Psoas muscle (tissue), 8 donors: ENCODE measurements at regions of chr6 and their contacts with region 1.

Region 1: GRCh38 chr6:107114213-107114905 is 956 bp downstream of the BEND3 start:
- DNase-seq: peak; percentile 90 to 93
- ATAC-seq: peak; percentile 94 to 98 (median 96)
- H3K4me3 ChIP-seq: peak overlapping the region; percentile 94
- H3K27ac ChIP-seq: peak overlapping the region; percentile 86
- H3K4me1 ChIP-seq: peaks cover 12% of the 10 kb centered on the region
- H3K27me3 ChIP-seq: no peaks in the 10 kb centered on the region
- CTCF ChIP-seq: peak; percentile 95

Region 2: GRCh38 chr6:106512048-106512967 is 602.1 kb before region 1 on chr6:
- intact Hi-C with region 1: no loop called
- DNase-seq: peak; percentile 70 to 81
- ATAC-seq: peak; percentile 60 to 79 (median 68)
- H3K4me3 ChIP-seq: peak overlapping the region; percentile 77
- H3K27ac ChIP-seq: peak overlapping the region; percentile 62
- H3K4me1 ChIP-seq: peaks cover 5% of the 10 kb centered on the region
- H3K27me3 ChIP-seq: peaks cover 3 to 65% (median 25%) of the 10 kb centered on the region in 3 donors
- CTCF ChIP-seq: no peak

Region 3: DNA sequence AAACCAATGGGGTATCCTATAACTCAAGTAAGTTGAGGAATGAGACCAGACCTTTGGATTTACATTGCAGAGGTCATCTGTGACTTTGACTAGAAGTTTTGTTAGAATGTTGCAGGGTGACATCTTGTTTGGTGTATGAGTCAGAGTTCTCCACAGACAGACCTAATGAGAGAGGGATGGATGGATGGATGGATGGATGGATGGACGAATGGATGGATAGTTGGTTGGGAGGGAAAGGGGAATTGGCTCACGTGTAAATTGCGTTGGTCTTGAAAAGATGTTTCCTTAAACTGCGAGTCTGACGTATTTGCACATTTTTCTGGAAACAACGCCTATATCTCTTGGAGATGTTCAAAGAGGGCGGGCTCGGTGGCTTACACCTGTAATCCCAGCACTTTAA is 87.4 kb before region 1 on chr6:
- intact Hi-C with region 1: loop called (anchors 1 to 5 kb)
- DNase-seq: no peak
- ATAC-seq: no peak
- H3K4me3 ChIP-seq: no peak overlapping the region
- H3K27ac ChIP-seq: no peak overlapping the region
- H3K4me1 ChIP-seq: peaks cover 17% of the 10 kb centered on the region
- H3K27me3 ChIP-seq: no peaks in the 10 kb centered on the region
- CTCF ChIP-seq: no peak

Region 4: DNA sequence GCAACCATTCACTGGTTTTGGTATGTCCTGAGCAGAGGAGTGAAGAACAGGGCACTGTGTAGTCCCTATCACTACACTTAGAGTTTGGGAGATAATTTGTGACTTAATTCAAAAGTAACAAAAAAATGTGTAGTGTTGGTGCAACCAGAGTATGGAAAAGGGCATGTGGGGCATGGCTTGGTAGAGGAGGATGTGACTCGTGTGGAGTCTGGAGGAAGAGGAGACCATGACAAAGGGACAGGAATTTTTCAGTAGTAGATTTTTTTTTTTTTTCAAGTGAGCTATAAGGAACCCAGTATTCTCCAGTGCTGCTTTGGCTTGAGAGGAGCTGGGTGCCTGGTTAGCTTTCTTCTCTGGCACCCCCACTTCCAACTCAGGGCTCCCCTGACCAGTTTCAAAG is 81.2 kb before region 1 on chr6:
- intact Hi-C with region 1: loop called (anchors 1 to 5 kb)
- DNase-seq: no peak
- ATAC-seq: no peak
- H3K4me3 ChIP-seq: no peak overlapping the region
- H3K27ac ChIP-seq: no peak overlapping the region
- H3K4me1 ChIP-seq: peaks cover 17% of the 10 kb centered on the region
- H3K27me3 ChIP-seq: no peaks in the 10 kb centered on the region
- CTCF ChIP-seq: no peak

Region 5: DNA sequence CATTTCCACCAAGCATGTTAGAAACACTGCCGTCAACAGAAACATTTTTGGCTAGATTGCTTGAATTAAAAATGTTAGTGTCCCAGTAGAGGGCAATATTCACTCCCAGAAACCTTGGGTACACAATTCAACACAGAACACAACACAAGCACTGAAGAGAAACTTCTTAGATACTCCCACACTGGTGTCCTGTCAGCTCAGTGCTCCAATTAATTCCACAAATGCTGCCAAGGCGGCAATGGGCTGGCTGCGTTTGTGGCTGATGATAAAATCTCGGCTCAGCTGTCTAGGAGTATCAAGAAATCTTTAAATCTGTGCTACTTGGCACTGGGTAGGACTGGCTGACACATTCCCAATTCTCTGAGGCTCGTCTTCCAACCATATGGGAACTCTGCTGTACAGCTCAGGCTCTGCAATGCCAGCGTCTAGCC is 38.4 kb before region 1 on chr6:
- intact Hi-C with region 1: loop called in 1 of 2 experiments (anchors 5 kb)
- DNase-seq: no peak
- ATAC-seq: peak; percentile 47 to 66 (median 59)
- H3K4me3 ChIP-seq: peak overlapping the region; percentile 22
- H3K27ac ChIP-seq: no peak overlapping the region
- H3K4me1 ChIP-seq: no peaks in the 10 kb centered on the region
- H3K27me3 ChIP-seq: no peaks in the 10 kb centered on the region
- CTCF ChIP-seq: no peak

Region 6: DNA sequence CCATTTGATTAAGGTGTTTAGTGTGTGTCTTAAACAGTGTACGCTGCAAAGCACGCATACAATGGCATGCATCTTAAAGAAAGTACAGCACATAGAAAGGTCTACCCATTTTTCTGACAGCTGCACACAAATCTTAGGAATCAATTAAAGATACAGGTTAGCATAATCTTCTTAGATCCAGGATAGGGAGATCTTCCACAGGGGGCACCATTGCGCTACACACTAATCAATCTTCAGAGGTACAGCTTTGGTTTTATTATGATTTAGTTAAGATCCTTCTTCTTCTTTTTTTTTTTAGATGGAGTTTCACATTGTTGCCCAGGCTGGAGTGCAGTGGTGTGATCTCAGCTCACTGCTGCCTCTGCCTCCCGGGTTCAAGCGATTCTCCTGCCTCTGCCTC is 64.6 kb after region 1 on chr6:
- intact Hi-C with region 1: no loop called
- DNase-seq: no peak
- ATAC-seq: no peak
- H3K4me3 ChIP-seq: no peak overlapping the region
- H3K27ac ChIP-seq: no peak overlapping the region
- H3K4me1 ChIP-seq: no peaks in the 10 kb centered on the region
- H3K27me3 ChIP-seq: no peaks in the 10 kb centered on the region
- CTCF ChIP-seq: peak; percentile 8